H1 (cell line): ENCODE measurements at regions of chr19 and their contacts with region 1.

Region 1: DNA sequence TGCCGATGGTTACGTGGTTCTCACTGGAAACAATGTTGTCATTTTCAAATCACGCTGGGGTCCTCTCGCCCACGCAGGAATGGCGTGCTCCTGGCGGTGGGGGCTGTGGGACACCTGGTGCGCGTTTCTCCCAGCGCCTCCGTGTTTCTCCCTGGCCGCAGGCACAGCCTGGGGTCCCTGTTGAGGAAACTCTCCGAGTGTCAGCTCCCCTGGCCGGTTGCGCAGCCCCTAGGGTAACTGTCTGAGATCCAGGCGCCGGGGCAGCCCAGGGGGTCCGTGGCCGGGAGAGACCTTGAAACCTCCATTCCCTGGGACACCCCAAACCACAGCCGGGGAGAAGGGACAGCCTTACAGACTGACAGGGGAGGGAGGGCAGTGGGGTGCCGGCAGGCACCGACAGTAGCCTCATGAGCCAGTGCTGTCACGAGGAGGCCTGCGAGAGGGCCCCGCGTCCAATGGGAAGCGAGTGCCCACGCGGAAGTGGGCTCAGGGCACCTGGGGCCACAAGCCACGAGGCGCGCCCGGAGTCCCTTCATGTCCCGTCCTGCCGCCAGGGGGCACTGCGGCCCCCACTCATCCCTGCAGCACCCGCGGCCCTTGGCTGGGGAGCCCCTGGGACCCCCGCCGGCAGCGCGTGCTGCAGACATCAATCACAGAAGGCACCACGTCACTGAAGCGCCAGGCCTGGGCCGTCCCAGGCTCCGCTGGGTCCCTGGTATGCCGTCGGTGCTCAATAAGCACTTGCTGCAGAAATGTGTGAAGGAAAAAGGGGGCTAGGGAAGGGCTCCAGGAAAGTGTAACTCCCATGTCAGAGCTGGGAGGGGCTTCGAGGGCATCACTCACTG is 9.5 kb downstream of the ADAMTSL5 start:
- DNase-seq: peak in 1 of 2 experiments; percentile 93
- H3K4me3 ChIP-seq: peak overlapping the region; percentile 4 to 52 (median 20); a peak in 5 of 8 replicates
- H3K27ac ChIP-seq: no peak overlapping the region
- H3K4me1 ChIP-seq: peaks cover 0 to 10% (median 6%) of the 10 kb centered on the region in 4 experiments; a peak in 5 of 7 replicates
- H3K27me3 ChIP-seq: peaks cover 0 to 19% (median 16%) of the 10 kb centered on the region in 4 experiments; a peak in 5 of 7 replicates
- CTCF ChIP-seq: peak; percentile 58 to 84 (median 77)
- EP300 ChIP-seq: no peak
- POLR2A ChIP-seq: no peak
- RAD21 ChIP-seq: peak; percentile 28 to 48

Region 2: DNA sequence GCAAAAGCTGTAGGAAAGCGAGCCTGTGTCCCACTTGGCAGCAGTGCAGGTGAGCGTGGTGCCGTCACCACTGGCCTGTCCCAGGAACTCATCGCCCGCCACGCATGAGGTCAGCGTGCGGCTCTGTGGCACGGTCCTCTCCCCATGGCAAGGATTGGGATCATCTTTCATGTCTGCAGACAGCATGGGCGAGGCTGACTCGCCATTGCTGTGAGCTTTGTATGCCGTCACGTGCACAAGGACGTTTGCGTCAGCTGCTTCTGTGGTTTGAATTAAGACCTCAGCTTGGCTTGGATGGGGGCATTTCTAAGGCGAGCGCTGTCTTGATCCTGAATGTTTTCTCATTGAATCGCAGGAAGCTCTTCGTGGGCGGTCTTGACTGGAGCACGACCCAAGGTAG is 86.2 kb before region 1 on chr19:
- CTCF ChIA-PET with region 1: no interaction called
- POLR2A ChIA-PET with region 1: no interaction called
- DNase-seq: no peak
- H3K4me3 ChIP-seq: no peak overlapping the region
- H3K27ac ChIP-seq: 0 out of 2 replicates have a peak overlapping the region, but pooled peaks have one; percentile 8
- H3K4me1 ChIP-seq: peaks cover 8 to 27% (median 17%) of the 10 kb centered on the region in 4 experiments
- H3K27me3 ChIP-seq: no peaks in the 10 kb centered on the region
- CTCF ChIP-seq: no peak
- EP300 ChIP-seq: no peak
- POLR2A ChIP-seq: no peak
- RAD21 ChIP-seq: no peak

Region 3: DNA sequence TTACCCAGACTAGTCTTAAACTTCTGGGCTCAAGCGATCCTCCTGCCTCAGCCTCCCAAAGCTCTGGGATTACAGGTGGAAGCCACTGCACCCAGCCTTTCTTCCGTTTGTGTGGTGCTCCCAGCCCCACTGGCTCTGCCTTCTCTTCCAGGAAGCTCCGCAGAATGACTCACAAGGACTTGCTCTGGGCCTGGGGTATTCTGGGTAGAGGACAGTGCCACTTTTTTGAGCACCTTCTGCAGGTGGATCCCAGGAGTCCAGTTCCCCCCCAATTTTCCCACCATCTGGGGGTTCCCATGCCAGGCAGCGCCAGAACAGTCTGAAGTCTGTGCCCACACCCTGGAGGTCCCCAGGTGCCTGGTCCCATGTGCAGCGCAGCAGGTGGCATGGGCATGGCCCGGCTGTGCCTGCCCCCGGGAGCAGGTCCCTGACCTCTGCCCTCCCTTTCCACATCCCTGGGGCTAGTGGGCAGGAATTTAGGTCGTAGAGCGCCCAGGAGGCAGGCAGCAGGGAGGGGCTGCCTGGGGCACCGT is 10.8 kb before region 1 on chr19:
- CTCF ChIA-PET with region 1: interaction called, 14 read pairs
- POLR2A ChIA-PET with region 1: interaction called, 7 read pairs
- DNase-seq: no peak
- H3K4me3 ChIP-seq: no peak overlapping the region
- H3K27ac ChIP-seq: no peak overlapping the region
- H3K4me1 ChIP-seq: peaks cover 0 to 5% (median 2%) of the 10 kb centered on the region in 4 experiments; a peak in 5 of 7 replicates
- H3K27me3 ChIP-seq: peaks cover 3 to 17% (median 9%) of the 10 kb centered on the region in 4 experiments; a peak in 6 of 7 replicates
- CTCF ChIP-seq: no peak
- EP300 ChIP-seq: no peak
- POLR2A ChIP-seq: no peak
- RAD21 ChIP-seq: no peak